GM12878 (cell line): ENCODE measurements at regions of chr3 and their contacts with region 1.

Region 1: GRCh38 chr3:32143849-32144757 is 37.7 kb downstream of the GPD1L start:
- DNase-seq: peak; percentile 13
- ATAC-seq: peak; percentile 94
- H3K4me3 ChIP-seq: no peak overlapping the region
- H3K27ac ChIP-seq: no peak overlapping the region
- H3K4me1 ChIP-seq: no peaks in the 10 kb centered on the region; the same call in 1 of the 2 replicates
- H3K27me3 ChIP-seq: no peaks in the 10 kb centered on the region
- CTCF ChIP-seq: peak; percentile 65 to 82 (median 73); a peak in 5 of 6 replicates
- EP300 ChIP-seq: no peak
- POLR2A ChIP-seq: no peak
- RAD21 ChIP-seq: peak; percentile 82

Region 2: GRCh38 chr3:31485196-31485595 is 658.9 kb before region 1 on chr3:
- CTCF ChIA-PET with region 1: no interaction called
- POLR2A ChIA-PET with region 1: no interaction called
- RAD21 ChIA-PET with region 1: no interaction called
- SMC1A ChIA-PET with region 1: no interaction called
- in situ Hi-C with region 1: no loop called
- intact Hi-C with region 1: no loop called
- DNase-seq: no peak
- ATAC-seq: no peak
- H3K4me3 ChIP-seq: no peak overlapping the region
- H3K27ac ChIP-seq: no peak overlapping the region
- H3K4me1 ChIP-seq: no peaks in the 10 kb centered on the region
- H3K27me3 ChIP-seq: no peaks in the 10 kb centered on the region
- CTCF ChIP-seq: no peak
- EP300 ChIP-seq: no peak
- POLR2A ChIP-seq: no peak
- RAD21 ChIP-seq: no peak

Region 3: GRCh38 chr3:31610700-31611275 is 533.3 kb before region 1 on chr3:
- CTCF ChIA-PET with region 1: no interaction called
- POLR2A ChIA-PET with region 1: no interaction called
- RAD21 ChIA-PET with region 1: no interaction called
- SMC1A ChIA-PET with region 1: no interaction called
- in situ Hi-C with region 1: no loop called
- intact Hi-C with region 1: loop called (anchors 10 kb)
- DNase-seq: no peak
- ATAC-seq: peak; percentile 50; the same call in 2 of the 3 replicates
- H3K4me3 ChIP-seq: no peak overlapping the region
- H3K27ac ChIP-seq: no peak overlapping the region
- H3K4me1 ChIP-seq: no peaks in the 10 kb centered on the region
- H3K27me3 ChIP-seq: no peaks in the 10 kb centered on the region
- CTCF ChIP-seq: peak; percentile 24 to 40 (median 28); a peak in 3 of 6 replicates
- EP300 ChIP-seq: no peak
- POLR2A ChIP-seq: no peak
- RAD21 ChIP-seq: peak; percentile 33; the same call in 1 of the 2 replicates

Region 4: GRCh38 chr3:31858439-31858838 is 285.7 kb before region 1 on chr3:
- CTCF ChIA-PET with region 1: no interaction called
- POLR2A ChIA-PET with region 1: no interaction called
- RAD21 ChIA-PET with region 1: no interaction called
- SMC1A ChIA-PET with region 1: no interaction called
- in situ Hi-C with region 1: no loop called
- intact Hi-C with region 1: loop called (anchors 2 kb)
- DNase-seq: no peak
- ATAC-seq: peak; percentile 35; the same call in 2 of the 3 replicates
- H3K4me3 ChIP-seq: no peak overlapping the region
- H3K27ac ChIP-seq: no peak overlapping the region
- H3K4me1 ChIP-seq: no peaks in the 10 kb centered on the region
- H3K27me3 ChIP-seq: no peaks in the 10 kb centered on the region
- CTCF ChIP-seq: peak in 2 of 3 experiments; percentile 5 to 19; a peak in 1 of 6 replicates
- EP300 ChIP-seq: no peak
- POLR2A ChIP-seq: no peak
- RAD21 ChIP-seq: no peak

Region 5: GRCh38 chr3:32018757-32019564 is 125.1 kb before region 1 on chr3:
- CTCF ChIA-PET with region 1: interaction called, 50 read pairs
- POLR2A ChIA-PET with region 1: no interaction called
- RAD21 ChIA-PET with region 1: interaction called, 8 read pairs
- SMC1A ChIA-PET with region 1: interaction called, 22 read pairs
- in situ Hi-C with region 1: no loop called
- intact Hi-C with region 1: loop called (anchors 1 kb)
- DNase-seq: no peak
- ATAC-seq: peak; percentile 51; the same call in 2 of the 3 replicates
- H3K4me3 ChIP-seq: no peak overlapping the region
- H3K27ac ChIP-seq: no peak overlapping the region
- H3K4me1 ChIP-seq: no peaks in the 10 kb centered on the region
- H3K27me3 ChIP-seq: no peaks in the 10 kb centered on the region
- CTCF ChIP-seq: peak; percentile 50 to 63 (median 53)
- EP300 ChIP-seq: no peak
- POLR2A ChIP-seq: no peak
- RAD21 ChIP-seq: peak; percentile 66

Region 6: DNA sequence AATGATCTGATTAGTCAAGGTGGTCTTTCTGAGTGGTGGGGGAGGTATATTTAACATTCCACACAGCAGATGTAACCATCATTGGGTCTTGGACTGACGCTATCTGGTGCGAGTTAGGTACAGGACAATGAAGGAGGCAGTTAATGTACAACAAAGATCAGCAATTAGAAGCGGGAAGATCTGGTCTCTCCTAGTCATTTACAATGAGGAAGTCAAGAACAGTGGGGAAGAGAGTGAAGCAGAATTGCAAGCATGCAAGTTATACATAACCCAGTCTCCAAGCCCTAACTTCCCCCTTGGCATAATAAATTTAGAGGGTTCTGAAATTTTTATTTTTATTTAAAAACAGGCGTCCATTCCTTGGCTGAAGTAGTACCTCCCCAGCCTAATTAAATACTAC is 23.6 kb before region 1 on chr3:
- CTCF ChIA-PET with region 1: no interaction called
- POLR2A ChIA-PET with region 1: no interaction called
- RAD21 ChIA-PET with region 1: no interaction called
- SMC1A ChIA-PET with region 1: no interaction called
- in situ Hi-C with region 1: no loop called
- intact Hi-C with region 1: no loop called
- DNase-seq: no peak
- ATAC-seq: no peak
- H3K4me3 ChIP-seq: no peak overlapping the region
- H3K27ac ChIP-seq: no peak overlapping the region
- H3K4me1 ChIP-seq: no peaks in the 10 kb centered on the region
- H3K27me3 ChIP-seq: no peaks in the 10 kb centered on the region
- CTCF ChIP-seq: no peak
- EP300 ChIP-seq: no peak
- POLR2A ChIP-seq: no peak
- RAD21 ChIP-seq: no peak

Region 7: DNA sequence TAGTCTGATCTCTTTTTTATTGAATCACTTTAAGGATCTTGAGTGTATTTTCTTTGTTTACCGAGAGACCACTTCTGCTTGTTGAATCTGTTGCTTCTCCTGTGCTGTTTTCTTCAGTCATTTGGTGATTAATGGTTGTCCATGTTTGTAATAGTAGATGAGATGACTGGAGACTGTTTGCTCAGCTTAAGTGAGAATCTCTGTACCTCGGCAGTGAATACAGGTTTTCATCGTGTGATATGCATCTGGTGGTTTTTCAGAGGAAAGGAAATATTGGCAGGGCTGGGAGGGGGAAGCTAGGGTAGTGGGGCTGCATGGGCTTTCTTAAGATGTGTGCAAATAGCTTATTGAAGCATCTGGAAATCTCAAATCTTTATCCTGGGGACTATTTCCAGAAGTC is 113.5 kb after region 1 on chr3:
- CTCF ChIA-PET with region 1: no interaction called
- POLR2A ChIA-PET with region 1: no interaction called
- RAD21 ChIA-PET with region 1: no interaction called
- SMC1A ChIA-PET with region 1: no interaction called
- in situ Hi-C with region 1: no loop called
- intact Hi-C with region 1: no loop called
- DNase-seq: no peak
- ATAC-seq: no peak
- H3K4me3 ChIP-seq: no peak overlapping the region
- H3K27ac ChIP-seq: no peak overlapping the region
- H3K4me1 ChIP-seq: no peaks in the 10 kb centered on the region
- H3K27me3 ChIP-seq: no peaks in the 10 kb centered on the region; a peak in 1 of 4 replicates
- CTCF ChIP-seq: no peak
- EP300 ChIP-seq: no peak
- POLR2A ChIP-seq: no peak
- RAD21 ChIP-seq: no peak